ENCODE measurements at regions of chr3 and their contacts with region 1.

Region 1: DNA sequence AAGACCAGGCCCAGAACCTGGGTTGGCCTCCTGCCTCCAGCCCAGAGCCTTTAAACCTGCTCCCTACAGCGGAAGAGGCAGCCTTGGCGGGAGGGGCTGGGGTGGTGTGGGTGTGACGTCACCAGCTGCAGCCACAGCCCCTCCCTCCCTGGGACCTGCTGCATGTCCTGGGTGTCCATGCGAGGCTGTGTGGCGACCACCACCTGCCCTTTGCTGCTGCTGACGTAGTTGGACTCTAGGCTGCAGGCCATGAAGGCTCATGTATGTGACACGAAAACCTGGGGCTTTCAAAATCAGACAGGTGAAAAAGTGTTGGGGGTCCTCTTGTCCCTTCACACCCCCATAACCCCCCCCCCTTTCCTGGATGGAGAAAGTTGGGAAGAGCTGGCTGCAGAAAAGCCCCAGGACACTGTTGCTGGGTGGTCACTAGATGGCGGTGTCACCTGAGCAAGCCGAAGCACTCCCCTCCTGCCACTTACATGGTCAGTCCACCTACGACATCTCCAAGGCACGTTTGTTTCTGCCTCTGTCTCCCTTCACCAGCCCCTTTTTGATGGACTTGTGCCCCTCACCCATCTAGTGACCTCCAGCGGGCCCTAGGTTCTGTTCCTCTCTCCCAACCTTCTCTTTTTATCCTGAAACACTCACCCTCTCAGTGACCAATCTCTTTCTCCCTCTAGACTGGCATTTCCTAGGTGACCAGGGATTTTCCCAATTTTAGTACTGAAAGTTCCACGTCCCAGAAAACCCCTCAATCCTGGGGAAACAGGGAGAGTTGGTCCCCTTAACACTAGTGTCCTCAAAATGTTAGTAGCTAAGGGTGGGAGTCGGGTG is 35.2 kb downstream of the SLC6A20 start:
- DNase-seq: peak in 1 of 3 donors; percentile 59
- ATAC-seq: peak; percentile 69 to 72
- H3K4me3 ChIP-seq: no peak overlapping the region
- H3K27ac ChIP-seq: no peak overlapping the region
- H3K4me1 ChIP-seq: no peaks in the 10 kb centered on the region
- H3K27me3 ChIP-seq: no peaks in the 10 kb centered on the region

Region 2: DNA sequence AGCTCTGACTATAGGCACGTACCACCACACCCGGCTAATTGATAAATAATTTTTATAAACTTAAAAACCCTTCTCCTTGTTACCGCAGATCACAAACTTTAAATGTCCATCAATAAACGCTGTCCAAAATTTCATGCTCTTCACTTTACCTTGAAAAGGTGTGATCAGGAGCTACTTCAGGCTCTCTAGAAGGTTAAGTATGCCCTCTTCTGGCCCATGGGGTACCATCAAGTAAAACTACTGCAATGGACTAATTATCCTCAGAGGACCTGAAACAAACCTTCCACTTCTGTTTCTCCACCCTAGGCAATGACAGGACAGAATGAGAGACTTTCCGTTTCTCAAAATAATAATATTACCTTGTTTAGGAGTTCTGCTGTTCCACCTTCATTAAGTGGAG is 71.6 kb after region 1 on chr3:
- intact Hi-C with region 1: loop called in 1 of 4 experiments (anchors 5 kb)
- DNase-seq: no peak
- ATAC-seq: no peak
- H3K4me3 ChIP-seq: no peak overlapping the region
- H3K27ac ChIP-seq: no peak overlapping the region
- H3K4me1 ChIP-seq: no peaks in the 10 kb centered on the region
- H3K27me3 ChIP-seq: no peaks in the 10 kb centered on the region

Region 3: GRCh38 chr3:46078712-46079400 is 317.8 kb after region 1 on chr3:
- intact Hi-C with region 1: loop called in 1 of 4 experiments (anchors 5 kb)
- DNase-seq: peak; percentile 83 to 94 (median 88)
- ATAC-seq: peak; percentile 94 to 97
- H3K4me3 ChIP-seq: no peak overlapping the region
- H3K27ac ChIP-seq: no peak overlapping the region
- H3K4me1 ChIP-seq: no peaks in the 10 kb centered on the region
- H3K27me3 ChIP-seq: no peaks in the 10 kb centered on the region

Region 4: GRCh38 chr3:46214751-46215352 is 453.8 kb after region 1 on chr3:
- intact Hi-C with region 1: no loop called
- DNase-seq: no peak
- ATAC-seq: no peak
- H3K4me3 ChIP-seq: no peak overlapping the region
- H3K27ac ChIP-seq: no peak overlapping the region
- H3K4me1 ChIP-seq: no peaks in the 10 kb centered on the region
- H3K27me3 ChIP-seq: no peaks in the 10 kb centered on the region